ENCODE measurements at regions of chr17 and their contacts with region 1.

Region 1: DNA sequence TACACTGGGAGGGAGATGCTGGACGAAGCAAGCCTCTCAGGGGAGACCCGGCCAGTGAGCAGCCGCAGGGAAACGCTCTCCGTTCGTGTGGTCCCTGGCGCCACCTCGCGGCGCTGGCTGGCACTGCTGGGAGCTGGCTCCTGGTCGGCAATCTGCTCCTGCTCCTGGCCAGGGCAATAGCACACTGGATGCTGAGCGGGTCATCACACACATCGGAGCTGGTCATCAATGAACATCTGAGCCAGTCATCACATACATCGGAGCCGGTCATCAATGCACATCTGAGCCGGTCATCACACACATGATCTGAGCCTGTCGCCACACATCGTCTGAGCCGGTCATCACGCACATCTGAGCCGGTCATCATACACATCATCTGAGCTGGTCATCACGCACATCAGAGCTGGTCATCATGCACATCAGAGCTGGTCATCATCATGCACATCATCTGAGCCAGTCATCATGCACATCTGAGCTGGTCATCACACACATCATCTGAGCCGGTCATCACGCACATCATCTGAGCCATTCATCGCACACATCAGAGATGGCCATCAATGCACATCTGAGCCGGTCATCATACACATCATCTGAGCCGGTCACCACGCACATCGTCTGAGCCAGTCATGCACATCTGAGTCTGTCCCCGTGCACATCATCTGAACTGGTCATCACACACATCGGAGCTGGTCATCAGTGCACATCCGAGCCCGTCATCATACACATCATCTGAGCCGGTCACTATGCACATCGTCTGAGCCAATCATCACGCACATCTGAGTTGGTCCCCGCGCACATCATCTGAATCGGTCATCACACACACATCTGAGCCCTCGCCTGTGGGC is 217.3 kb downstream of the RBFOX3 start:
- DNase-seq: peak; percentile 91
- ATAC-seq: peak; percentile 81
- H3K4me3 ChIP-seq: no peak overlapping the region
- H3K27ac ChIP-seq: no peak overlapping the region
- H3K4me1 ChIP-seq: no peaks in the 10 kb centered on the region
- H3K27me3 ChIP-seq: peaks cover 94% of the 10 kb centered on the region
- CTCF ChIP-seq: peak; percentile 98

Region 2: GRCh38 chr17:79126139-79126538 is 267.4 kb before region 1 on chr17:
- CTCF ChIA-PET with region 1: no interaction called
- POLR2A ChIA-PET with region 1: interaction called, 15 read pairs
- intact Hi-C with region 1: no loop called
- DNase-seq: peak; percentile 33
- ATAC-seq: peak; percentile 64
- H3K4me3 ChIP-seq: no peak overlapping the region
- H3K27ac ChIP-seq: no peak overlapping the region
- H3K4me1 ChIP-seq: no peaks in the 10 kb centered on the region
- H3K27me3 ChIP-seq: peaks cover 98% of the 10 kb centered on the region
- CTCF ChIP-seq: peak; percentile 70

Region 3: DNA sequence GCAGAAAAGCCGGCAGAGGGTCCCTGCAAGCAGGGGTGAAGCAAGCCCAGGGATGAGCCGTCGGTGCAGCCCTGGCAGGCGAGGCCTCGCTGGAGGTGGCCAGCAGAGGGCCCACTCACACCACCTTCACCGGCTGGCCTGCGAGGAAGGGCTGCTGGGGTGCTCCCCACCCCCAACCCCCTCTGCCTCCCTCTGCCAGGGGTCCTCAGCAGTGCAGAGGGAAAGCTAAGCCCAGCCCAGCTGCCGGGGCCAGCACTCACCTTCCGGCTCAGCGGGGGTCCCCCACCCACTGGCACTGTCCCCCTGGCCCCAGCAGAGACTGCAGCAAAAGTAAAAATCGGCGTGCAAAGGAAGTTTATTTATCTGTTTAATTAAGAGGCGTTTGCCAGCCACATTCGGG is 205.5 kb before region 1 on chr17:
- CTCF ChIA-PET with region 1: interaction called, 9 read pairs
- POLR2A ChIA-PET with region 1: no interaction called
- intact Hi-C with region 1: loop called (anchors 1 kb)
- DNase-seq: peak; percentile 42
- ATAC-seq: peak; percentile 80
- H3K4me3 ChIP-seq: no peak overlapping the region
- H3K27ac ChIP-seq: no peak overlapping the region
- H3K4me1 ChIP-seq: no peaks in the 10 kb centered on the region
- H3K27me3 ChIP-seq: peaks cover 99% of the 10 kb centered on the region
- CTCF ChIP-seq: peak; percentile 85

Region 4: DNA sequence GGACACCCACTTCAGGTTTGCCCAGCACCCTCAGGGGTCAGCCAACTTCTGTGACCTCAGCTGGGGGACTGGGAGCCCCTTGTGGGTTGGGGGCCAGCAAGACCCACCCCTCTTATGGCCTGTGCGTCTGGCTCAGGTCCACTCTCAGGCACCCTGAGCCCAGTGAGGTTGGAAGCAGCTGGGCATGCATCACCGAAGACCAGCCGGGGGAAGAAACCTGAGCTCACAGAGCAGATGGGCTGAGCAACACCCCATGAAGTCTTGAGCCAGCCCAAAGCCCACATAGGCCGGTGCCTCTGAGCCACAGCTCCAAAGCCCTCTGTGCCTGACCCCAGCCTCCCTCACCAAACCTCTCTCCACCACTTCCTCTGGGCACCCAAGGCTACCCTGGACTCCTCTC is 50.6 kb after region 1 on chr17:
- CTCF ChIA-PET with region 1: no interaction called
- POLR2A ChIA-PET with region 1: no interaction called
- intact Hi-C with region 1: no loop called
- DNase-seq: no peak
- ATAC-seq: no peak
- H3K4me3 ChIP-seq: no peak overlapping the region
- H3K27ac ChIP-seq: no peak overlapping the region
- H3K4me1 ChIP-seq: no peaks in the 10 kb centered on the region
- H3K27me3 ChIP-seq: peaks cover 74% of the 10 kb centered on the region
- CTCF ChIP-seq: no peak